Activated T-helper 1 cell treated with anti-CD3 and anti-CD28 coated beads, Interleukin-12 subunit alpha, Interleukin-12 subunit beta, Interleukin-2, Interleukin-4 antibody, amounts not matched to agents 30 ng/mL and 10 ng/mL and 1 ng/mL, durations not matched to agents 14 hours and 24 hours and 36 hours (primary cell): ENCODE measurements at regions of chr6 and their contacts with region 1.

Region 1: DNA sequence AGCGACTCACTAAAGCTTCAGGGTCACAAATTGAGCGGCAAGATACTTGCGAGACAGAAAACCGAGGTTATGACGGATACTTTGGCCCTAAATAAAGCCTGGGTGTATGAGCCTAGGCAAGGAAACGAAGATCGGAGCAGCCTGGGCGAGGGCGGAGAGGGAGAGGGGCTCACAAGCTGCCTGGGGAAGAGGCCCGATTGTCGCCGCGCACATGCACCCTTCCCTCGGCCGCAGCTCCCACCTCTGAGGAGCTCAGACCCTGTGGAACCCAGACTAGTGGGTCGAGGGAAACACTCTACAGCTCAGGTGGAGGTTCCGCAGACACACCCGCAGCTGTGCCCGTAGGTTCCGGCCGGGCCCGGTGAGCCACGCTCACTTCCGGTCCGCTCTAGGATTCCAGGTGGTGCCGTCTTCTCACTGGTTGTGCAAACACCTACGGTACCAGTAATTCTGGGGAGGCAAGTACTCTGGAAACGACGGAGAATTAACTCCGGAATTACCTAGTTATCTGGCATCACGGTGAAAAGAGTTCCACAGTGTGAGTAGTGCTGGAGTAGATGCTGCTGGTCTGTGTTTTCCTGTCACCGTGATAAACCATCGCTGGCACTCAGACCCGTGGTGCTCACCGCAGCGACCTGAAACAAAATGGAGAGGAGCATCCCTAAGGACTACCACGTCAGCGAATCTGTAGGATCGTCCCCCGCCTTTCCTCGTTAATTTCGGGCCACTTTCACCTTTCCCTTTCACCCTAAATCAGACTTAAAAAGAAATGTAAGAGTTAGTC is 61.5 kb downstream of the GPX5 start:
- DNase-seq: peak; percentile 49
- H3K4me3 Mint-ChIP-seq: peak overlapping the region; percentile 83
- H3K27ac Mint-ChIP-seq: no peak overlapping the region
- H3K4me1 Mint-ChIP-seq: peaks cover 43% of the 10 kb centered on the region
- H3K27me3 Mint-ChIP-seq: peaks cover 53% of the 10 kb centered on the region

Region 2: GRCh38 chr6:28207510-28208110 is 379.5 kb before region 1 on chr6:
- intact Hi-C with region 1: loop called (anchors 5 kb)
- DNase-seq: no peak
- H3K4me3 Mint-ChIP-seq: peak overlapping the region; percentile 86
- H3K27ac Mint-ChIP-seq: no peak overlapping the region
- H3K4me1 Mint-ChIP-seq: peaks cover 31% of the 10 kb centered on the region
- H3K27me3 Mint-ChIP-seq: peaks cover 75% of the 10 kb centered on the region

Region 3: GRCh38 chr6:28443112-28443773 is 143.9 kb before region 1 on chr6 and contains the start of gene ZSCAN23:
- intact Hi-C with region 1: loop called (anchors 5 kb)
- DNase-seq: peak; percentile 79
- H3K4me3 Mint-ChIP-seq: peak within 1 kb of the TSS; percentile 98
- H3K27ac Mint-ChIP-seq: peak within 1 kb of the TSS; percentile 89
- H3K4me1 Mint-ChIP-seq: peaks cover 41% of the 10 kb centered on the region
- H3K27me3 Mint-ChIP-seq: peaks cover 16% of the 10 kb centered on the region
- total RNA-seq, gene ZSCAN23: 1.1 and 2.2 TPM in 2 replicates

Region 4: GRCh38 chr6:28542440-28543296 is 44.5 kb before region 1 on chr6:
- intact Hi-C with region 1: loop called (anchors 2 kb)
- DNase-seq: peak; percentile 18
- H3K4me3 Mint-ChIP-seq: peak overlapping the region; percentile 77
- H3K27ac Mint-ChIP-seq: peak overlapping the region; percentile 44
- H3K4me1 Mint-ChIP-seq: peaks cover 28% of the 10 kb centered on the region
- H3K27me3 Mint-ChIP-seq: peaks cover 44% of the 10 kb centered on the region

Region 5: GRCh38 chr6:28683944-28684538 is 96.9 kb after region 1 on chr6:
- intact Hi-C with region 1: loop called (anchors 5 kb)
- DNase-seq: no peak
- H3K4me3 Mint-ChIP-seq: no peak overlapping the region
- H3K27ac Mint-ChIP-seq: no peak overlapping the region
- H3K4me1 Mint-ChIP-seq: peaks cover 19% of the 10 kb centered on the region
- H3K27me3 Mint-ChIP-seq: peaks cover 65% of the 10 kb centered on the region